ENCODE measurements at regions of chr6 and their contacts with region 1.

Region 1: GRCh38 chr6:98039869-98040607 is 757.0 kb upstream of the MMS22L start:
- DNase-seq: no peak
- ATAC-seq: no peak
- H3K4me3 ChIP-seq: no peak overlapping the region
- H3K27ac ChIP-seq: no peak overlapping the region
- H3K4me1 ChIP-seq: no peaks in the 10 kb centered on the region
- H3K27me3 ChIP-seq: peaks cover 42% of the 10 kb centered on the region
- CTCF ChIP-seq: peak in 1 of 3 experiments; percentile 45; a peak in 2 of 6 replicates
- POLR2A ChIP-seq: no peak
- RAD21 ChIP-seq: peak; percentile 49

Region 2: DNA sequence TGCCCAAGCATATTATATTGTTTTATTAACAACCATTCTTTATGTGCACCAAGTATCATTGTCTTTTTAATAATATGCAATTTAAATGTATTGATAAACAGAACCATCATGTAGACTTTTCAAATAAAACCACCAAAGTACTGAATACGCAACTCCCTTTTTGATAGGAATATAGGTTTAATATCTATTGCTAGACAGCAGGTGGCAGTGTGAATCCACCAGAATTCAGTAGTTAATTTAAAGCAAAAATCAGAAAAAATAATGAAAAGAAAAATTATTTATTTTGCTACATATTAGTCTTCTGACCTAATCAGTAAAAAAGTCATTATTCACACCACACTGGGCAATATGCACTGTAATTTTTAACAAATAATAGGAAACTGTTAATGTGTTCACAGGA is 971.8 kb before region 1 on chr6:
- CTCF ChIA-PET with region 1: no interaction called
- POLR2A ChIA-PET with region 1: no interaction called
- RAD21 ChIA-PET with region 1: no interaction called
- intact Hi-C with region 1: loop called (anchors 10 kb)
- DNase-seq: peak; percentile 12
- ATAC-seq: no peak
- H3K4me3 ChIP-seq: no peak overlapping the region
- H3K27ac ChIP-seq: no peak overlapping the region
- H3K4me1 ChIP-seq: peaks cover 0 to 8% of the 10 kb centered on the region in 2 experiments; a peak in 1 of 4 replicates
- H3K27me3 ChIP-seq: no peaks in the 10 kb centered on the region
- CTCF ChIP-seq: peak; percentile 28 to 56 (median 54); a peak in 4 of 6 replicates
- POLR2A ChIP-seq: no peak
- RAD21 ChIP-seq: peak; percentile 75

Region 3: GRCh38 chr6:98230250-98230649 is 190.2 kb after region 1 on chr6:
- CTCF ChIA-PET with region 1: no interaction called
- POLR2A ChIA-PET with region 1: no interaction called
- RAD21 ChIA-PET with region 1: no interaction called
- intact Hi-C with region 1: no loop called
- DNase-seq: no peak
- ATAC-seq: no peak
- H3K4me3 ChIP-seq: no peak overlapping the region
- H3K27ac ChIP-seq: no peak overlapping the region
- H3K4me1 ChIP-seq: no peaks in the 10 kb centered on the region
- H3K27me3 ChIP-seq: no peaks in the 10 kb centered on the region
- CTCF ChIP-seq: no peak
- POLR2A ChIP-seq: no peak
- RAD21 ChIP-seq: no peak

Measured in HCT116 (cell line).